HepG2 (cell line): ENCODE measurements at regions of chr1 and their contacts with region 1.

Region 1: GRCh38 chr1:224650290-224650689 is 34.2 kb downstream of the CNIH3 start:
- DNase-seq: no peak
- ATAC-seq: no peak
- H3K4me3 ChIP-seq: no peak overlapping the region
- H3K27ac ChIP-seq: no peak overlapping the region
- H3K4me1 ChIP-seq: no peaks in the 10 kb centered on the region
- H3K27me3 ChIP-seq: peaks cover 0 to 1% of the 10 kb centered on the region in 2 experiments; a peak in 1 of 5 replicates
- CTCF ChIP-seq: no peak
- EP300 ChIP-seq: no peak
- POLR2A ChIP-seq: no peak
- RAD21 ChIP-seq: no peak

Region 2: DNA sequence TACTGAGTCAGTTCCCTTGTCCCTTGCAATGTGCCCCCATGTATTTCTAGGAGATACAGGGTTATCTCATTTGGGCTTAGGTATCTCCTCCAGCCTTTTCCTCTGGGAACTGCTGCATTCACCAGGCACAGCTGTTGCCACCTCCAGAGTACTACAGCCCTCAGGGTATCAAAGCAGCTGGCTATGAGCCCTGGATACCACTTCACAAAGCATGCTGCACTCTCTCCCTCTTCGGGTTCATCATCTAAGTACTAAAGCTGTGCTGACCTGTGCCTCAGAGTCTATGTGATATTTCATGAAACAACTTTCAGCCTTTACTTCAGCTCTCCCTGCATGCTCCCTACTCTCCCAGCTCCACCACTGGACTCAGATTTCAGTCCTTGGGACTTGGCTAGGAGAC is 1194.8 kb before region 1 on chr1:
- CTCF ChIA-PET with region 1: no interaction called
- POLR2A ChIA-PET with region 1: no interaction called
- in situ Hi-C with region 1: no loop called
- intact Hi-C with region 1: loop called (anchors 5 kb)
- DNase-seq: no peak
- ATAC-seq: no peak
- H3K4me3 ChIP-seq: no peak overlapping the region
- H3K27ac ChIP-seq: no peak overlapping the region
- H3K4me1 ChIP-seq: no peaks in the 10 kb centered on the region
- H3K27me3 ChIP-seq: no peaks in the 10 kb centered on the region; a peak in 1 of 5 replicates
- CTCF ChIP-seq: no peak
- EP300 ChIP-seq: no peak
- POLR2A ChIP-seq: no peak
- RAD21 ChIP-seq: no peak

Region 3: GRCh38 chr1:224759681-224760091 is 109.4 kb after region 1 on chr1:
- CTCF ChIA-PET with region 1: no interaction called
- POLR2A ChIA-PET with region 1: no interaction called
- in situ Hi-C with region 1: no loop called
- intact Hi-C with region 1: no loop called
- DNase-seq: no peak
- ATAC-seq: no peak
- H3K4me3 ChIP-seq: no peak overlapping the region
- H3K27ac ChIP-seq: no peak overlapping the region
- H3K4me1 ChIP-seq: no peaks in the 10 kb centered on the region
- H3K27me3 ChIP-seq: no peaks in the 10 kb centered on the region
- CTCF ChIP-seq: no peak
- EP300 ChIP-seq: no peak
- POLR2A ChIP-seq: no peak
- RAD21 ChIP-seq: no peak